Thyroid gland (tissue), 4 donors: ENCODE measurements at regions of chr18 and their contacts with region 1.

Region 1: DNA sequence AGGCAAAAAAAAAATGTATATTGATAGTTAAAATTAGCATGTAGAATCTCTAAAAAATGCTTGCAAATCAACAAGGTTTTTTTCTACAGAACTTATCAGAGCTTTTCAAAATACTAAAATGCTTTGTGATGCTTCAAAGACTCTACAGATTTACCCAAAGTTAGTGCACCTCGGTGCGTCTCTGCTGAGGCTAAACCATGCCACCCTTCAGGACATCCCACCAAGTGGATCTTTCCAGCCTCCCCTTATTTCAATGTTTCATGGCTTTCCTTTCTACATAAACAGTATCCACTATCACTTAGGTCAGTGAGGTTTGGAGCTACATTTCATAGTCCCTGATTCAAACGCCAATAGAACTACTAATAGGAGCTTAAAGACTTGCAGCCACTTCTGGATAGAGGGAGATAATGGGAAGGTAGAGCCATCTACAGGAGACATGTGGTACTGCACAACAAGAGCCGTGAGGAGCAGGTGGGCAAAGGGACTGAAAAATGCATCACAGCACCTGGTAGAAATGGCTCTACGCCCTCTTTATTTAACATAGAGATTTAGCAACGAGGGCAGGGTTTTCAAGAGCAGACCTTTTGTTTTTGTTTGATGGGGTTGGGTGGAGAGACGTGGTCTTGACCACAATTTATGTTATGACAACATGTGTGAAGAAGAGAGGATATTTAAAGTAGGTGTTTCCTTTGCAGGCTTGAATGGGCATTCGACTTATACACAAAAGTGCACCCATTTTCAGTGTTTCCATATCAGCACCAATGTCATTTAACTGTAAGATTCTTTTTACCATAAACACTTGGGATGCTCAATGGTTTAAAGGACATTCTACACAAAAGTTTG is 56.1 kb upstream of the SLC35G4 start:
- DNase-seq: peak; percentile 18 to 24
- H3K4me3 ChIP-seq: no peak overlapping the region
- H3K27ac ChIP-seq: no peak overlapping the region
- H3K4me1 ChIP-seq: no peaks in the 10 kb centered on the region
- H3K27me3 ChIP-seq: no peaks in the 10 kb centered on the region
- CTCF ChIP-seq: peak; percentile 72 to 87 (median 78)
- POLR2A ChIP-seq: no peak

Region 2: DNA sequence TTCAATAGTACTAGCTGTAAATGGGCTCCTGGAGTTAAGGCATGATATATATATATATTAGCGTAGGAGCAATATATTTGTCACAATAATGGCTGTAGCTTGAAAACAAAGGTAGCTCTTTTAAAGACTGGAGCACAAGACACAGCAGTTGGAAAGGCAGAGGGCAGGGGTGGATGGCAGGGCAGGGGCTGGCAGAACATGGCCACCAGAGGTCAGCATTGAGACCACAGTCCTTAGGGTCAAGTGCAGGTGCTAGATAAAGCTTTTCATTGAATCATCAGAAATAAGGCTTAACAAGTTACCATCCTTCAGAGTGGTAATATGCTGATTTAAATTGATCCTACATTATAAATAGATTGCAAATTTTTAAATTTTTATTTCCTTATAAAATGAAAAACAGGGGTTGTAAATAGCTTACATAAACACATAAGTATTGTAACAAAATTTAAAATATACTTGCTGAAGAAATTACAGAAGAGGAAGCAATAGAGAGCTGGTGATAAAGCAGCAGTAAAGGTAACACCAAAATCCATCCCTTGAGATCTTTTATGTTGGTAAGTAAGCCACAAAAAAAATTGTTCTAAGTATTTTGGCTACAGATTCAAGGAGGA is 242.7 kb before region 1 on chr18:
- intact Hi-C with region 1: loop called (anchors 5 kb)
- DNase-seq: peak; percentile 46 to 49
- H3K4me3 ChIP-seq: no peak overlapping the region
- H3K27ac ChIP-seq: no peak overlapping the region
- H3K4me1 ChIP-seq: no peaks in the 10 kb centered on the region
- H3K27me3 ChIP-seq: no peaks in the 10 kb centered on the region
- CTCF ChIP-seq: peak in 4 of 6 experiments; percentile 33 to 59 (median 46)
- POLR2A ChIP-seq: no peak